ENCODE measurements at regions of chr2 and their contacts with region 1.

Region 1: DNA sequence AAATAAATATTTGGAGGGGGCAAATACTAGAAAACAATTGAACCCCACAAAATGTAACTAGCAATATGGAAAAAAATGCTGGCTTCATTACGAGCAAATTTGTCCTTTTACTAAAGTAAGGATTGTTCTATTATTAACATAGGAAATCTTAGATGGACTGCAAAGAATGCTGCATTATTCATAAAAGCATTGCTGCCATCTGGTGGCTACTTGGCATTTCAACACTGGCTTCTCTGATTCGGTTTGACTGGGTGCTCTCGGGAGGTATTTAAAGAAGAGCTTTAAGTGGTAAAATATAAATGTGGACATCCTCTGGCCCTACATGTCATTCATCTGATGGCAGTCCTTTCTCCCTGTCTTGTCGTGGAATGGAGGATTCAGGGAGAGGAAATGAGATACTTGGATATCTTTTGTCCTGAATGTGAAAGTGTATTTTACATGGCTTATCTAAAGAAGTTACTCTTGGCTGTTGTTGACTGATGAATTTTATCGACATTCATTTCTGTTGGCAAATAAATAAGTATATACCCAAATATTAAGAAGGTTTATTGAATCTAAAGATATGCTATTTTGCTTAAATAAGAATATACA is 130.2 kb downstream of the ARHGAP15 start:
- DNase-seq: peak; percentile 42
- ATAC-seq: peak; percentile 24
- H3K4me3 Mint-ChIP-seq: peak overlapping the region; percentile 75
- H3K27ac Mint-ChIP-seq: peak overlapping the region; percentile 96
- H3K4me1 Mint-ChIP-seq: peaks cover 51% of the 10 kb centered on the region
- H3K27me3 Mint-ChIP-seq: no peaks in the 10 kb centered on the region

Region 2: DNA sequence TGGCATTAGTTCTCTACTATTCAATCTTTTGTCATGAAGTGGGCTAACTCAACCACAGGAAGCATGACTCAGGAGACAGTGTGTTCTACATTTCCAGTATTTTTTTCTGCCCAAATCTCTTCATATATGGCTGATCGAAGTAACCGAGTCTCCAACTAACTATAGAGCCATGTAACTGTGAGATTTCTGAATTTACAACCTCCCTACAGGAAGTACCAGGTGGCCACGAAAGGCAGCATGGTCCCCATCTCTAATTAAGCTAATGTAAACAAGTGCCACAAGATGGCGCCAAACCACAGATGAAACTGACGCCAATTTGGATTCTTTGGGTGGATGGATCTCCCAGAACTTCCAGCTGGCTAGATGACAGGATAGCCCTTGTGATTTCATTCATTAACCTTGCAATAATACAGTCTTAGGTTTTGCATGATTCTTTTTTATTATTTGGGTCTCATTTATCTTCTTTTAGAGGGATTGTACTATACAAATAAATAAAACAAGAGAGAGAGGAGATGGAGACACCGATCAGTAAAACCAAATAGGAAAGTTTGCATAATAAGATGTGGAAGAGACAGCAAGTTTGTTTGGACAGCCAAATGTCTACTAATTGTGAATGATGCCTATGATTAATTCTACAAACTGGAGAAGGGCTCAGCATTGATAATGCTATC is 148.6 kb before region 1 on chr2:
- POLR2A ChIA-PET with region 1: interaction called, 11 read pairs
- DNase-seq: peak; percentile 45
- ATAC-seq: peak; percentile 85
- H3K4me3 Mint-ChIP-seq: peak overlapping the region; percentile 59
- H3K27ac Mint-ChIP-seq: peak overlapping the region; percentile 70
- H3K4me1 Mint-ChIP-seq: peaks cover 30% of the 10 kb centered on the region
- H3K27me3 Mint-ChIP-seq: no peaks in the 10 kb centered on the region

Region 3: GRCh38 chr2:143128681-143129580 is 130.5 kb before region 1 on chr2 and contains the start of gene ARHGAP15:
- POLR2A ChIA-PET with region 1: interaction called, 14 read pairs
- DNase-seq: peak; percentile 71
- ATAC-seq: peak; percentile 82
- H3K4me3 Mint-ChIP-seq: peak within 1 kb of the TSS; percentile 83
- H3K27ac Mint-ChIP-seq: peak within 1 kb of the TSS; percentile 98
- H3K4me1 Mint-ChIP-seq: peaks cover 40% of the 10 kb centered on the region
- H3K27me3 Mint-ChIP-seq: no peaks in the 10 kb centered on the region
- total RNA-seq, gene ARHGAP15: 141 TPM

Region 4: GRCh38 chr2:143195511-143195910 is 64.0 kb before region 1 on chr2:
- POLR2A ChIA-PET with region 1: no interaction called
- DNase-seq: no peak
- ATAC-seq: no peak
- H3K4me3 Mint-ChIP-seq: no peak overlapping the region
- H3K27ac Mint-ChIP-seq: no peak overlapping the region
- H3K4me1 Mint-ChIP-seq: no peaks in the 10 kb centered on the region
- H3K27me3 Mint-ChIP-seq: no peaks in the 10 kb centered on the region

Region 5: DNA sequence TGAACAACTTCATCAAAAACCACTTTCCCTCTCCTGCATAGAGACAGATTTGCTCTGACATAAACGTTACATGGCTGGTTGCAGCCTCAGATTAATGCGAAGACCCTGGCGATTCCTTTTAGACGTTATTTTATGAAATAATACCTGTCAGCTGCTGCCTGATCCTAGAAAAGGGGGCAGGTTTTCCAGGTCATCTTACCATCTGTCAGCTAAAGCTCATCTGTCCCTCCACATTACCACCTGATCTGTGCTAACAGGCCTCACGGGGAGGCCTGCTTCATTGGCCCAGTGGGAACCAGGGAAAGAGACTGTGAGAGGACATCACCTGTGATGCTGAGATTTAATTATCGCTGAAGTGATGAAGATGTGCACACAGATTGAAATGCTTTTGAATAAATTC is 130.7 kb after region 1 on chr2:
- POLR2A ChIA-PET with region 1: no interaction called
- DNase-seq: no peak
- ATAC-seq: no peak
- H3K4me3 Mint-ChIP-seq: no peak overlapping the region
- H3K27ac Mint-ChIP-seq: no peak overlapping the region
- H3K4me1 Mint-ChIP-seq: peaks cover 2% of the 10 kb centered on the region
- H3K27me3 Mint-ChIP-seq: no peaks in the 10 kb centered on the region

Measured in activated naive CD8-positive, alpha-beta T cell treated with anti-CD3 and anti-CD28 coated beads, Interleukin-2, amount 10 ng/mL, durations not matched to agents 7 days and 5 days (primary cell).